GM10248 (cell line): ENCODE measurements at regions of chr6 and their contacts with region 1.

Region 1: DNA sequence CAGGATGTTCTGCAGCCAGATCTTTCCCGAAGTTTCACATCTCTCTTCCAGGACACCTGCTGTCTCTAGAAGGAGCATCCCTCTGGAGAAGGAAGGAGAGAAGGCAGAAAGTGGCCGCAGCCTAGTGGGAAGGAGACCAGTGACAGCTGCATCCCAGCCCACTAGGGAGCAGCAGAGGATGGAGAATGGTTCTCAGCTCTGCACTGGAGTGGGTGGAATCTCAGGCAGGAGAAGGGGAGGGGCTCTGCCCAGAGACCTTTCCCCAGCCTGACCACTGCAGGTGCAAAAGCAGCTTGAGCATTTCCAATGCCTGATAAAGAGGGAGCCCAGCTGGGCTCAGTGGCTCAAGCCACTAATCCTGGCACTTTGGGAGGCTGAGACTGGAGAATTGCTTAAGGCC is 32.3 kb downstream of the NCR2 start:
- DNase-seq: peak; percentile 32
- CTCF ChIP-seq: peak; percentile 50

Region 2: GRCh38 chr6:41125282-41125681 is 242.4 kb before region 1 on chr6:
- CTCF ChIA-PET with region 1: no interaction called
- POLR2A ChIA-PET with region 1: no interaction called
- DNase-seq: no peak
- CTCF ChIP-seq: no peak

Region 3: DNA sequence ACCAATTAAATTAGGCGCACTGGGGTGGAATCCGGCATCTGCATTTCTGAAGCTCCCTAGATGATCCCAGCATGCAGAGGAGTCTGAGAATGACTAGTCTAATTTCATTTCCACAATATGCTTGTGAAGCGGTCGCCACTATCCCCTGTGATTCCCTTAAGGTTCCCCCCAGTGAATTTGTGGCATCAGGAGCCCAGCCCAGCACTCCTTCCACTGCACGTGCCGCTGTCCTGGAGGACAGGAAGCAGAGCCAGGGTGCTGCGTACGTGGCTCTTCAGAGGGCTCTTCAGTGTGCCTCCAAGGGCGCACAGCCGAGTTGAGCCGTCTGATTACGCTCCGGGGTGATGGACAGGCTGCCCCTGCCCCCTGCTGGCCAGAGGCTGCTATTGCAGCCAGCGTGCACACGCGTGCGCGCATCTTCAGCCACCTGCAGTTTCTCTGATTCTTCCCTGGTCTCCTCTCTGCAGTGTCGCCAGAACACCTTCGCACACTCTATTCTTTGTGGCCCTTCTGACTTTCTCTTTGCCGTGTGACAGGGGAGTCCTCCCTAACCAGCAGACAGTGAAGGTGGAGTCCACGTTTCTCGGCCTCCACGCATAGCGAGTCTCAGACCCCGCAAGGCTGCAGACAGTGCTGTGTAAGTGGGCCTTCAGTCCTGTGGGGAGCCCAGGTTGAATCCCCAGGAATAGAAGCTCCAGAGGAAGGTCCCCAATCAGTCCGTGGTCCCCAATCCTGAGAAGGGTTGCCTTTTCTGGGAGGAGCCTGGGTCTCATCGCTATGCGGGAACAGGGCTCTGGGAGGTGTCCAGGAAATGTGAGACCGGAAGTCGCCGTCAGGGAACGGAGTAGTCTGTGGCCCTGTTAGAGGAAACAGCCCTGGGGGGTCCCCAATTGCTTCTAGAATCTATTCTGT is 48.8 kb before region 1 on chr6:
- CTCF ChIA-PET with region 1: interaction called, 13 read pairs
- POLR2A ChIA-PET with region 1: no interaction called
- DNase-seq: peak; percentile 85
- CTCF ChIP-seq: peak; percentile 100

Region 4: GRCh38 chr6:41352396-41352795 is 15.3 kb before region 1 on chr6:
- CTCF ChIA-PET with region 1: interaction called, 43 read pairs
- POLR2A ChIA-PET with region 1: no interaction called
- DNase-seq: no peak
- CTCF ChIP-seq: no peak

Region 5: GRCh38 chr6:41424370-41425058 is 56.8 kb after region 1 on chr6:
- CTCF ChIA-PET with region 1: interaction called, 13 read pairs
- POLR2A ChIA-PET with region 1: no interaction called
- DNase-seq: peak; percentile 77
- CTCF ChIP-seq: peak; percentile 89

Region 6: DNA sequence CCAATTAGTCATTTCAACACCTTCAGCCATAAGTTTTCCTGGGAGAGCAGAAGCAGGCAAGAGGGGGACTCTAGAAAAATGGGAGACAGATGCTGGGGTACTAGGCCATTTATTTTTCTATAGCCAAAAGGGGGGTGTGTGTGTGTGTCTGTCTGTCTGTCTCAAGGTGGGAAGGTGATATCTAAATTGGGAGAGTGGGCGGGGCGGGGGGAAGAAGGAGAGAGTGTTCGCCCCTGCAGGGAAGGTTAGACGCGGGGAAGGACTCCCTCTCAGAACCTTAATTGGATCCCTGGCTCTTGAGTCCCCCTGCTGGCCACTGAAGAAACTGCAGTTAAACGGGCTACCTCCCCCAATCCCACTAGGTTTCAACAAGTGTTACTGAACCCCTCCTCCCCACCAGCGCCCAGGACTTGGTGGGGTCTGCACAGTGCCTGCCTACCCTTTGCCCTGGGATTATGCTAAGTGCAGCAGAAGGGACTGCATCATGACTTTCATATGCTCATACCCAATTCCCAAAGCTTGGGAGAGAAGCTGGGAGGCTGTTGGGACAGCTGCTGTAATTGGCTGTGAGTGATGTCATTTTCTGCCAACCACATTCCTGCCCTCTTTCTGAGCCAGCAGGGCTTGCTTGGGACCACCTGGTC is 224.3 kb after region 1 on chr6:
- CTCF ChIA-PET with region 1: interaction called, 14 read pairs
- POLR2A ChIA-PET with region 1: no interaction called
- DNase-seq: peak; percentile 89
- CTCF ChIP-seq: peak; percentile 80